ENCODE measurements at regions of chr10 and their contacts with region 1.

Region 1: GRCh38 chr10:97676770-97677581 is 10.1 kb downstream of the AVPI1 start:
- DNase-seq: no peak
- H3K4me3 ChIP-seq: no peak overlapping the region
- H3K27me3 ChIP-seq: no peaks in the 10 kb centered on the region
- CTCF ChIP-seq: peak; percentile 87

Region 2: GRCh38 chr10:97664282-97664850 is 12.6 kb before region 1 on chr10:
- CTCF ChIA-PET with region 1: interaction called, 13 read pairs
- POLR2A ChIA-PET with region 1: no interaction called
- DNase-seq: no peak
- H3K4me3 ChIP-seq: no peak overlapping the region
- H3K27me3 ChIP-seq: no peaks in the 10 kb centered on the region
- CTCF ChIP-seq: no peak

Region 3: GRCh38 chr10:97701438-97702069 is 24.6 kb after region 1 on chr10:
- CTCF ChIA-PET with region 1: interaction called, 30 read pairs
- POLR2A ChIA-PET with region 1: no interaction called
- DNase-seq: no peak
- H3K4me3 ChIP-seq: no peak overlapping the region
- H3K27me3 ChIP-seq: no peaks in the 10 kb centered on the region; the same call in 1 of the 2 replicates
- CTCF ChIP-seq: peak; percentile 92

Region 4: GRCh38 chr10:97714048-97714371 is 37.0 kb after region 1 on chr10:
- CTCF ChIA-PET with region 1: interaction called, 12 read pairs
- POLR2A ChIA-PET with region 1: interaction called, 3 read pairs
- DNase-seq: no peak
- H3K4me3 ChIP-seq: peak overlapping the region; percentile 71
- H3K27me3 ChIP-seq: no peaks in the 10 kb centered on the region
- CTCF ChIP-seq: peak; percentile 37

Region 5: DNA sequence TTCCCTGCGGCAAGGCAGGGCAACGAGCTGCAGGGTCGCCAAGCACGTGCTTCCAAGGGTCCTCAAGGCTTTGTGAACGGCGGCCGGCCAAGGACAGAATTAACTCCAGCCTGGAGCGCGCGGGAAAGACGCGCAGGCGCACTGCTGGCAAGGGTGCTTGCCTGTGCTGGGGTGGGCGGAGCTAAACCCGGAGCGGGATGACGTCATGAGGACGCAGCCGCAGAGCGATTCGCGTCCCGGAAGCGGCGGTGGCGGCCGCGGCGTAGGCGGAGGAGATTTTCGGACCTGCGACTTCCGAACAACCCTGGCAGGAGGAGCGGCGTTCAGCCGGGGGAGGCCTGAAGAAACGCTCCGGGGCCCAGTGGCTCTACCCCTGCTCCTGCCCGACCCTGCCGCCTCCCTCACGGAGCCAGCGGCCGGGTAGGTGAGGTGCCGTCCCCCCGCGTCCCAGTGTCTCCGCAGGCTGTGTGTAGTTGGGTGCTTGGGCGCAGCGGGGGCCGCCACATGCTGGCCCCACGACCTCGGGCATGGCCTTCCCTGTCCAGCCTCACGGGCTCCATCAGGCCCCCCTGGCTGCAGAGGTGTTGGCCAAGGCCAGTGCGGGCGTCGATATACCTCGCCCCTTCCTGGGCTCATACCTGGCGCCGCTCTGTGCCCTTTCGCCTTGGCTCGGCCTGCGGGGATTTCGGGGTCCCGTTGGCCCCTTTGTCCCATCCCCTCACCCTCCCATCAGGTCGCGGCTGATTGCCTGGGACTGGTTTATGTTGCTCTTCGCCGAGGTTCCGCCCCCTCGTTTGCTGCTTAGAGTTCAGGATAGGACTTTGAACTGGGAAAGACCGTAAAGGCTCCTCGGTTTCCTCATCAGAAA is 60.2 kb after region 1 on chr10 and contains the start of gene ZFYVE27:
- CTCF ChIA-PET with region 1: interaction called, 99 read pairs
- POLR2A ChIA-PET with region 1: no interaction called
- DNase-seq: peak; percentile 72
- H3K4me3 ChIP-seq: peak within 1 kb of the TSS; percentile 74
- H3K27me3 ChIP-seq: no peaks in the 10 kb centered on the region
- CTCF ChIP-seq: no peak
- polyA plus RNA-seq, gene ZFYVE27: 16.1 and 22.9 TPM in 2 replicates